ENCODE measurements at regions of chr13 and their contacts with region 1.

Region 1: DNA sequence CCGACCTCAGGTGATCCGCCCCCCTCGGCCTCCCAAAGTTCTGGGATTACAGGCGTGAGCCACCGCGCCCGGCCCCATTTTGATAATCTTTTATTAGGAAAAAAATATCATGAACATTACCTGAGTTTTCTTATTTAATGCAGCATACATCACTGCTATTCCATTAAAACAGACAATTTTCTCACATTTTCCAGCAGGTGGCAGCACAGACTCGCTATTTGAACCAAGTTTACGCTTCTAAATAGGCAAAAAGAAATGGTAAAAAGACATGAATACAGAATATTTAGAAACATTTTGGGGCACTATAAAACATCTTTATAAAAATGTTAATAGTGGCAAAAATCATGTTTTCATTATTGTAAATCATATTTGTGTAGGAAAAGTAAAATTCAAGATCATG is 903.1 kb downstream of the SLITRK6 start:
- DNase-seq: no peak
- ATAC-seq: no peak

Region 2: GRCh38 chr13:84784443-84785153 is 111.5 kb before region 1 on chr13:
- intact Hi-C with region 1: no loop called
- DNase-seq: no peak
- ATAC-seq: no peak

Region 3: DNA sequence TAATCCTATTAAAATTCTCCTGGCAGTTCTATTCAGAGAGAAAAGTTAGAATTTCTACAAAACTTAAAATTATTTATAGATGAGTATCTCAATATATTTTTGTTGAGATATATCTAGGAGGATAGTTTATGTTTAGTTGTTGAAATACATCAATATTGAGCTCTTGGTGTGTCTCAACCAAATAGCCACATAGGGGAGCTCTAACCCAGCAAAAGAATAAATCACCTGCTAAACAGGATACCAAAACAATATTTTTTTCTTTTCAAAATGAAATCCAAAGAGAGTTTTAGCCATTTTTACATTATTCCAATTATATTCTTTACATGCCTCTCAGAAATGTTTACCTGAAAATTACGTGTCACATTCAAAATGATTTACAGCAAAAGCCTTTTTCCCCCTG is 51.7 kb before region 1 on chr13:
- intact Hi-C with region 1: no loop called
- DNase-seq: no peak
- ATAC-seq: no peak

Region 4: DNA sequence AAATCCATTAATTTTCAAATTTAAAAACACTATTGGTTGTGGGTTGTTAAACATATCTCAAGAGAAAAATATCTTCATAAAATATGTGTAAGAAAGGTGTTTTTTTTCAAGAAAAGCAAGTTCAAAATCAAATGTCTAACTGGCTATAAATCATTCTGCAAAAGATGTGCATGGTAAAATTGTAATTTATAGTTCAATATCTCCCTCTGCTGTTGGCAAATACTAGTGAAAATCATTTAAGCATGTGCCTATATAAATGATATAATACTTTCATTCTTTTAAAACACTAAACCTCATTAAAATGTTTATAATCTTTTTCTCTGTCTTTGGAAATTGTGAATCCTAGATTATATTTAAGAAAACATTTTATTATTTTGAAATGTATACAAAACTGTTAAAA is 920.3 kb after region 1 on chr13:
- intact Hi-C with region 1: loop called (anchors 10 kb)
- DNase-seq: no peak
- ATAC-seq: no peak